ENCODE measurements at regions of chr9 and their contacts with region 1.

Region 1: DNA sequence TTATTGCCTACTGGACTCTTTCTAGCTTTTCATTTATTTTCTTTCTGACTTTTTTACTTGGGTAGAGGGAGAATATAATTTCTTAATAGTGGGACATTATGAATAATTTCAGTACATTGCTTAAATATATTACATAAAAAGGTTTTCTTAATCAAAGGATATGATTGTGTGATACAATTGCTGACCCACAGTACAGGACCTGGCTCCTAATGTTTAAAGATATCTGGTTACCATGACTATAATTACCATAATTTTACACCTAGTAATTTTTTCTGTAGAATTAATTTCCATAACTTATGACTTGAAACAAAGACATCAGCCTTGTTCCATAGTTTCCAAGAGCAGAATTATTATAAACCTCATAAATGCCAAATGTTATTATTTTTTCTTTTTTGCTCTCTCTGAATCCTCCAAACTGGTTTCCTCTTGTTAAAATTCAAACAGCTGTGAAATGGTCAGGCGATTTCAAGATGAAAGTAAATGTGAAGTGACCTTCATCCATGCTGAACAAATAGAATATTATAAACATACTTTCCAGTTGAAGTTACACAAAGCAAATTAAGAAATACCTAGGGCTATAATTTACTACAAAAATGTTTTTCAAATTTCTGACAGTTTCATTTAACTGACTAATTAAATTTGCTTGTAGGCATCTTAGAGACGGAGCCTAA is 301.2 kb upstream of the TYRP1 start:
- DNase-seq: no peak
- H3K4me3 ChIP-seq: no peak overlapping the region
- H3K27ac ChIP-seq: no peak overlapping the region
- H3K4me1 ChIP-seq: no peaks in the 10 kb centered on the region
- H3K27me3 ChIP-seq: no peaks in the 10 kb centered on the region
- CTCF ChIP-seq: no peak
- EP300 ChIP-seq: no peak
- POLR2A ChIP-seq: no peak

Region 2: DNA sequence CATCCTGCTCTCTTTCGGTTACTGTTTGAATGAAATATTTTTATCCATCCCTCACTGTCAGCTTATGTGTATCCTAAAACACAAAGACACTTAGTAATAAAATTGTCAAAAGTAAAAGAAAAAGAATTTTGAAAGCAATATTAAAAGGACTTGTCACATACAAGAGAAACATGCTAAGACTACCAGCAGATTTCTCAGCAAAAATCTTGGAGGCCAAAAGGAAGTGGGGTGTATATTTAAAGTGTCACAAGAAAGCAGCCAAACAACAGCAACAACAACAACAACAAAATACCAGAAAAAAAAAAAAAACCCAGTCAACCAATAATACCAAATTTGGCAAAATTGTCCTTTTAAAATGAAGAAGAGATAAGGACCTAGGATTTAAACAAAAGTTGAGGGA is 377.5 kb before region 1 on chr9:
- in situ Hi-C with region 1: no loop called
- intact Hi-C with region 1: no loop called
- DNase-seq: no peak
- H3K4me3 ChIP-seq: no peak overlapping the region
- H3K27ac ChIP-seq: no peak overlapping the region
- H3K4me1 ChIP-seq: no peaks in the 10 kb centered on the region
- H3K27me3 ChIP-seq: no peaks in the 10 kb centered on the region
- CTCF ChIP-seq: no peak
- EP300 ChIP-seq: no peak
- POLR2A ChIP-seq: no peak

Region 3: DNA sequence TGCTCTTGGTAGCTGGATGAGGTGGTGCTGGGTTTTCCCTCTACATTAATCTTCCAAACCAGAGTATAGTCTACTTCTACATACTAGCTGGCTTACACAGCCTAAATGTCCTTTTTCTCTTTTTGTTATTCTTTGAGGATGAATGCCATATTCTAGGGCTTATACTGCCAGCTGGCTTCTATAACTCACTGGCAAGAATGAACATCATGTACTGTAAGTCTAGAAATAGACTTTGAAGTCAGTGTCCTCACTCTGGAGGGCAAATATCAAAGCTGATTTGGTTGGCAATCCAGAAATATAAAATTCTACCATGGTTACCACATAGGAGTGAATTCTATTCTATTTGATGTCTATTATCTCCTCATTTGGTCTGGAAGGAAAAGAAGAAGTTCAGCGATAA is 49.5 kb after region 1 on chr9:
- in situ Hi-C with region 1: loop called in 1 of 4 experiments (anchors 10 kb)
- intact Hi-C with region 1: no loop called
- DNase-seq: no peak
- H3K4me3 ChIP-seq: no peak overlapping the region
- H3K27ac ChIP-seq: no peak overlapping the region
- H3K4me1 ChIP-seq: no peaks in the 10 kb centered on the region
- H3K27me3 ChIP-seq: no peaks in the 10 kb centered on the region
- CTCF ChIP-seq: no peak
- EP300 ChIP-seq: no peak
- POLR2A ChIP-seq: no peak

Measured in transverse colon (tissue), 4 donors.